Prostate gland (tissue), 2 donors: ENCODE measurements at regions of chr20 and their contacts with region 1.

Region 1: GRCh38 chr20:54097236-54097529 is 26.8 kb upstream of the BCAS1 start:
- DNase-seq: no peak
- H3K4me3 ChIP-seq: no peak overlapping the region
- H3K27ac ChIP-seq: no peak overlapping the region
- H3K4me1 ChIP-seq: no peaks in the 10 kb centered on the region
- H3K27me3 ChIP-seq: no peaks in the 10 kb centered on the region
- CTCF ChIP-seq: no peak
- POLR2A ChIP-seq: no peak

Region 2: GRCh38 chr20:53857723-53858236 is 239.4 kb before region 1 on chr20:
- intact Hi-C with region 1: no loop called
- DNase-seq: peak; percentile 32
- H3K4me3 ChIP-seq: no peak overlapping the region
- H3K27ac ChIP-seq: peak overlapping the region; percentile 37 to 54
- H3K4me1 ChIP-seq: peaks cover 7% of the 10 kb centered on the region
- H3K27me3 ChIP-seq: no peaks in the 10 kb centered on the region
- CTCF ChIP-seq: no peak
- POLR2A ChIP-seq: no peak

Region 3: DNA sequence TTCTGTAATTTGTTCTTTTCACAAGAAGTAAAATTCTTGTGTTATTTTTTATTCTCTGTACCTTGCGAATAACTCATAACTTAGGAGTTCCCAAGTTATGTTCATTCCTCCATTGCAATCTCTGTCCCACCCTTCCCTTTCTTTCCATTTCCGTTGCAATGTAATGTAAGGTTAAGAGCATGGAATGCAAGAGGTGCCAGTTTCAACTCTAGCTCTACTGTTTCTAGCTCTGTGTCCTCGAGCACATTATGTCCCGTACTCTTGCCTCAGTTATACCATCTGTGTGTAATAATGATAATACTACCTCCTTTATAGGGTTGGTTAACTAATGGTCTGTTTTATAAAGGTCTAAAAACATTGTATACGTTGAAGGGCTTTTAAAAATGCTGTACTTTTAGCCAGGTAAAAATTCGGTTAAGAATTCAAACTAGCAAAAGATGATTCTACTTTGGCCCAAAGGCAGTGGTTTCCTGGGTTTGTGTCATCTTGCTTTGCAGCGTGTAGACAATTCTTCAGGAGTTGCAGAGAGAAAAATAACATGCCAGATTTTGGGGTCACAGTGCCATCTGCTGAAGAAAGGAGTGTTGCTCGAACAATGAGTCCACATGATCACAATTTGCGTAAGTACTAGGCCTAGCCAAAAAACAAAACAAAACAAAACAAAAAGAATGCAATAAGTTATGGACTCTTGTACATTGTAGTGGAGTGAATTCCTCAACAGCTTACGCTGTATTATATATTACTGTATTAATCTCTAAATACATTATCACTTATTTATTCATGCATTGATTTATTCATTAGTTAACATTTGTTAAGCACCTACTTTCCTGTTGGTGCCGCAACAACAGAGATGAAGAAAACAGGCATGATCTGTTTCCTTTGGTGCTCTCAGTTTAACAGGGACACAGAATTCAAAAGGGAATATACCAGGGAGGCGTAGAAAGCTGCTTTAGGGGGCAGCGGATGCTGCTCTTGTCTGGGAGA is 100.7 kb after region 1 on chr20:
- intact Hi-C with region 1: loop called (anchors 2 kb)
- DNase-seq: no peak
- H3K4me3 ChIP-seq: no peak overlapping the region
- H3K27ac ChIP-seq: no peak overlapping the region
- H3K4me1 ChIP-seq: no peaks in the 10 kb centered on the region
- H3K27me3 ChIP-seq: no peaks in the 10 kb centered on the region
- CTCF ChIP-seq: peak in 1 of 4 experiments; percentile 34
- POLR2A ChIP-seq: no peak

Region 4: DNA sequence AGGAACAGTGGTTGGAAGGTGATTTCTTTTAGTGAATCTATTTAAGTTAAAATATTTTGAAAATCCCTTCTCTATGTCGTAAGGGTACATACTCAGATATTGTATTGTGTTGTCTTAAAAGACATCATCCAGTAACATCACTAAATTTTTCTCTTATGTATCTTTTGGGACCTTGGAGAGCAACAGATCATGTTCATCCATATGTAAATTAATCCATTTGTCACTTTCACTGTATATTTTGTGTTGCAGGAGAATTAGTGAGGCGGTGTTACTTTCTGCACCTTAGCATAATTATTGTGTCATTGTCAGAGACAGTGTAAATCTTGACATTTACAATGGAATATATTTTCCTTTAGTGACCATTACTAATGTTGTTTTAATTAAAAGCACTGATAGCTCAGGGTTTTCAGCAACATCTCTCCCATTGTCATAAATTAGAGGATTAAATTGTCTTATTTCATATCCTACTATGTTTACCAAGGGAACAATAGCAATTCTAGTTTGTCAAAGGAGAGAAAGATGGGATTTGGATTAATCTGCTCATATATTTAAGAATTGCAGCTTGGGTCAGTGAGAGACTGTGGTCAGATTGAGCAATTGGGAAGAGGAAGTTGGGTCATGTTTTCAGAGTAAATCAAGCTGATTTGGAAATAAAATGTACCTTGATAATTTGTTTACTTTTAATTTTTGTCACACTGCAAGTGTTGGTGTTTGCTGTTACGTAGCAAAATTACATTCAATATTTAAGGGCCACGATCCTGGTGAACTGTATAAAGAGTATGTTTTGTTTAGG is 400.9 kb after region 1 on chr20:
- intact Hi-C with region 1: no loop called
- DNase-seq: no peak
- H3K4me3 ChIP-seq: no peak overlapping the region
- H3K27ac ChIP-seq: no peak overlapping the region
- H3K4me1 ChIP-seq: no peaks in the 10 kb centered on the region
- H3K27me3 ChIP-seq: no peaks in the 10 kb centered on the region
- CTCF ChIP-seq: no peak
- POLR2A ChIP-seq: no peak

Region 5: DNA sequence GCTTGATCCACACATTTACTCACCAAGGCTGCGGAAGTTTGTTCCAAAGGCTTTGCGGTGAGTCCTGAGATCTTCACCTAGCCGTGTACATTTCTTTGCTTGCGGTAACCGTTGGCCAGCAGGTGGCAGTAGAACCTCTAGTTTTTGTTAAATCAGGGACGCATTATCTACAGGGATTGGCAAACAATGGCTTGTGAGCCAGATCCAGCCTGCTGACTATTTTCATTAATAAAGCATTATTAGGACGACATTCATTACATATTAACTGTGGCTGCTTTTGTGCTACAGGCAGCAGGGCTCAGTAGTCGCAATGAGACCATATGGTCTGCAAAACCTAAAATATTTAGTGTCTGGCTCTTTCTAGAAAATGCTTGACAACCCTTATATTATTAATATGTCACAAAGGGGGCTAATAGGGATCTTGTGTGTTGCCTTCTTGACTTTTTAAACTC is 552.4 kb after region 1 on chr20:
- intact Hi-C with region 1: loop called (anchors 5 kb)
- DNase-seq: peak; percentile 80
- H3K4me3 ChIP-seq: no peak overlapping the region
- H3K27ac ChIP-seq: no peak overlapping the region
- H3K4me1 ChIP-seq: no peaks in the 10 kb centered on the region
- H3K27me3 ChIP-seq: no peaks in the 10 kb centered on the region
- CTCF ChIP-seq: peak; percentile 70 to 76 (median 74)
- POLR2A ChIP-seq: no peak